ENCODE measurements at regions of chr9 and their contacts with region 1.

Region 1: GRCh38 chr9:92706216-92706940 is 36.4 kb upstream of the IPPK start:
- DNase-seq: no peak
- ATAC-seq: peak; percentile 100
- H3K4me3 ChIP-seq: no peak overlapping the region
- H3K27ac ChIP-seq: no peak overlapping the region
- H3K4me1 ChIP-seq: peaks cover 5% of the 10 kb centered on the region; the same call in 1 of the 2 replicates
- H3K27me3 ChIP-seq: no peaks in the 10 kb centered on the region
- CTCF ChIP-seq: peak; percentile 58 to 81 (median 78)
- EP300 ChIP-seq: no peak
- POLR2A ChIP-seq: no peak
- RAD21 ChIP-seq: peak; percentile 57

Region 2: GRCh38 chr9:92669890-92670708 is 36.3 kb before region 1 on chr9 and contains the start of gene IPPK:
- CTCF ChIA-PET with region 1: interaction called, 6 read pairs
- POLR2A ChIA-PET with region 1: no interaction called
- RAD21 ChIA-PET with region 1: no interaction called
- SMC1A ChIA-PET with region 1: interaction called, 3 read pairs
- in situ Hi-C with region 1: no loop called
- intact Hi-C with region 1: loop called (anchors 5 kb)
- DNase-seq: peak; percentile 91
- ATAC-seq: peak; percentile 91
- H3K4me3 ChIP-seq: peak within 1 kb of the TSS; percentile 91
- H3K27ac ChIP-seq: peak within 1 kb of the TSS; percentile 94
- H3K4me1 ChIP-seq: peaks cover 18% of the 10 kb centered on the region
- H3K27me3 ChIP-seq: no peaks in the 10 kb centered on the region
- CTCF ChIP-seq: no peak
- EP300 ChIP-seq: no peak
- POLR2A ChIP-seq: peak; percentile 90
- RAD21 ChIP-seq: no peak
- polyA plus RNA-seq, gene IPPK: 2.1 to 4.0 TPM

Region 3: DNA sequence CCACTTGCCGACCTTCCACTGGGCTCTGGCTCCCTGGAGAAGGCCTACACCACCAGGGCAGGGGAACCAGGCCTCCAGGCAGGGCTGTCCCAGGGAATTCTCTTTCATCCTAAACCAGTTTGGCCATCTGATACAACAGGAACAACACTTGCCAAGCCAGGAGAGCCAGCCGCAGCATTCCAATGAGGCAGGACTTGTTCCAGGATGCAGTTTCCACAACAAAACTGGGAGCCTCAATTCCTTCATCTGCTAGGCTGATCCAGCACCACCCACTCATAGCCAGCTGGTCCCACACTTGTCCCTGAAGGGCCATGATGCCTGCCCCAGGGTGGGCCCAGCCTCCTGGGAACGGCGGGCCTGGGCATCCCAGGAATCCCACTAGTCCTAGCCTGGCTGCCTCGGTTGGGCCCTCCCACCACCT is 32.3 kb after region 1 on chr9:
- CTCF ChIA-PET with region 1: no interaction called
- POLR2A ChIA-PET with region 1: no interaction called
- RAD21 ChIA-PET with region 1: no interaction called
- SMC1A ChIA-PET with region 1: no interaction called
- in situ Hi-C with region 1: no loop called
- intact Hi-C with region 1: no loop called
- DNase-seq: no peak
- ATAC-seq: no peak
- H3K4me3 ChIP-seq: no peak overlapping the region
- H3K27ac ChIP-seq: no peak overlapping the region
- H3K4me1 ChIP-seq: peaks cover 21% of the 10 kb centered on the region
- H3K27me3 ChIP-seq: no peaks in the 10 kb centered on the region
- CTCF ChIP-seq: no peak
- EP300 ChIP-seq: no peak
- POLR2A ChIP-seq: no peak
- RAD21 ChIP-seq: no peak